ENCODE measurements at regions of chr14 and their contacts with region 1.

Region 1: GRCh38 chr14:69363055-69363454 is 35.0 kb downstream of the ERH start:
- DNase-seq: peak; percentile 18
- H3K4me3 ChIP-seq: no peak overlapping the region
- CTCF ChIP-seq: peak; percentile 65

Region 2: GRCh38 chr14:69247676-69248440 is 115.2 kb before region 1 on chr14:
- in situ Hi-C with region 1: loop called (anchors 5 kb)
- DNase-seq: peak; percentile 74
- H3K4me3 ChIP-seq: no peak overlapping the region
- CTCF ChIP-seq: peak; percentile 26

Region 3: DNA sequence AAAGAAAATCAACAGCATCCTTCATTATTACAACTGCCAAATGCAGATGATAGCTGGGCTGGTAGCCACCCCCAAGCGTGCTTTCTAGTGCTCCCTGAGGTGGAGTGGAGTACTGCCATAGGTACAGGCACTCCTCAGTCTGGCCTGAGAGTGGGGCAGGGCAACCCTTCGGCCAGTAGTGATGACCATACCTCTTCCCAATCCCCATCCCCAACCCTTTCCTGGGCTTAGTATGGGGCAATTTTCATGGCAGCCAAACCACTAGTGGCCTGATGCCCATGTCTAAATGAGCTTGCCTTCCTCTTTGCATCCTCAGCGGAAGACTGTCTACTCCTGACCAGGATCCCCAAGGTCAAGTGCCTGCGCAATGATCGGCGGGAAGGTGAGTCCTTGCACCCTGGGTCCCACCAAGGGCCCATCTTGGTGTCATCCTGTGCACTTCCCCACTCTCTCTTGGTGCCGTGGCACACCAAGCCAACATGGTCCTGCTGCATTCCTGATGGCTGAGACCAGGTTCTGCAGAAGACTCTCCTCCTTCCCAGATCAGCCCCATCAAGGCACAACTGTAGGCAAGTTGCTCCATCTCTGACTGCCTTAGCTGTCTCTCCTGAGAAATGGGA is 37.3 kb before region 1 on chr14:
- in situ Hi-C with region 1: no loop called
- DNase-seq: no peak
- H3K4me3 ChIP-seq: no peak overlapping the region
- CTCF ChIP-seq: peak; percentile 28

Region 4: DNA sequence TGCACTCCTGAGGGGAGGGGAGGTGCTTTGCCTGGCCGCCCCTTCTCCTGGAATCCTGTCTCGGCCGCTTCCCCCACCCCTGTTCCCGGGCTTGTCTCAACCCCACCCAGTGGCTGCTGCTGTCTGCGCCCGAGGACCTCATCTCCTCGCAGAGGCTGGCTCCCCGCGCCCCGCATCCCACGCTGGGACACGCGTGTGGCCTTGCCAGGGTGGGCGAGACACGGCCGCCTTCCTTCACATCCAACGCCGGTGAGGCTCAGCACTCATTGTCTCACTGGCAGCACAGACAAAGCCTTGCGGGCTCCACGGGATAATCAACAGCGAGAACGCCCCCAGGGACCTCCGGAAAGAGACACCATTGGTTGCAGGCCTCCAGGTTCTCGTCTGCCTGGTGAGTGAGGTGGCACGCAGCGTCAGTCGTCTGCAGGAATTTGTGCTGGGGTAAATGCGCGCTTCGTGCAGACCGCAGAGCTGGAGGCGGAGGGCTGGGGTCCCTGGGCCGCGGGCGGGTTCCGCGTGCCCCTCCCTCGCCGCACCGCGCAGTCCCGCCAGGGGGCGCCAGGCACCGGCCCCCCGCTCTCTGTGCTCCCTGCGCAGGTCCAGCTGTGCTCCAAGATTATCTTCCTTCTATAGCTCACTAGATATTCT is 184.8 kb after region 1 on chr14:
- in situ Hi-C with region 1: no loop called
- DNase-seq: no peak
- H3K4me3 ChIP-seq: peak overlapping the region; percentile 22
- CTCF ChIP-seq: peak; percentile 86

Measured in astrocyte of the cerebellum (primary cell).